CD14-positive monocyte (primary cell): ENCODE measurements at regions of chr3 and their contacts with region 1.

Region 1: DNA sequence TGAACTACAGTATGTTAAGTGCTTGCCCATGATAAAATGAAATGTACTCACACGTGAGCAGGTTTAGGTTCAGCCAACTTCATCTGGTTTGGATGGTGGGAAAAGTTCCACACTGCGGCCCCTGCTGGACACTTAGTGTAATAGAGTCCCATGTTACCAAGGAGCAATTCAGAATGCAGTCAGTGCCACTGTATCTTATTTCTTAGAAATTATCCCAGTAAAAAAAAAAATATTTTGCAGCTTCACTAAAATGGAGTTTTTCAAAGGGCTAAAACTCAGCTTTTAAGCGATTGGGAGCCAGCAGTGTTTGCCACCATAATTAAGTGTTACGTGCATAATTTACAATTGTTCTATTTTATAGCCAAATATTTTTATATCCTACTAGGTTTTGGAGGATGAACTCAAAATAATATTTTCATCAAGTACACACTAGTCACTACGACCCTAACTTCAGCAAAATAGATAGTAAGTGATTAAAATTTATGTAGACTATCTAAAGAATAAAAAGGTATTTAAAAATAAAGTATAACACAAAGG is 371.7 kb upstream of the GBE1 start:
- DNase-seq: peak; percentile 45 to 68 (median 62)
- H3K4me3 ChIP-seq: no peak overlapping the region
- H3K4me3 Mint-ChIP-seq: no peak overlapping the region
- H3K27ac ChIP-seq: no peak overlapping the region
- H3K27ac Mint-ChIP-seq: peak overlapping the region in 1 of 7 donors; percentile 58
- H3K4me1 ChIP-seq: peaks cover 14 to 21% of the 10 kb centered on the region in 2 donors
- H3K4me1 Mint-ChIP-seq: peaks cover 23% of the 10 kb centered on the region
- H3K27me3 ChIP-seq: no peaks in the 10 kb centered on the region
- H3K27me3 Mint-ChIP-seq: peaks cover 0 to 4% (median 0%) of the 10 kb centered on the region in 3 donors
- CTCF ChIP-seq: peak; percentile 90

Region 2: DNA sequence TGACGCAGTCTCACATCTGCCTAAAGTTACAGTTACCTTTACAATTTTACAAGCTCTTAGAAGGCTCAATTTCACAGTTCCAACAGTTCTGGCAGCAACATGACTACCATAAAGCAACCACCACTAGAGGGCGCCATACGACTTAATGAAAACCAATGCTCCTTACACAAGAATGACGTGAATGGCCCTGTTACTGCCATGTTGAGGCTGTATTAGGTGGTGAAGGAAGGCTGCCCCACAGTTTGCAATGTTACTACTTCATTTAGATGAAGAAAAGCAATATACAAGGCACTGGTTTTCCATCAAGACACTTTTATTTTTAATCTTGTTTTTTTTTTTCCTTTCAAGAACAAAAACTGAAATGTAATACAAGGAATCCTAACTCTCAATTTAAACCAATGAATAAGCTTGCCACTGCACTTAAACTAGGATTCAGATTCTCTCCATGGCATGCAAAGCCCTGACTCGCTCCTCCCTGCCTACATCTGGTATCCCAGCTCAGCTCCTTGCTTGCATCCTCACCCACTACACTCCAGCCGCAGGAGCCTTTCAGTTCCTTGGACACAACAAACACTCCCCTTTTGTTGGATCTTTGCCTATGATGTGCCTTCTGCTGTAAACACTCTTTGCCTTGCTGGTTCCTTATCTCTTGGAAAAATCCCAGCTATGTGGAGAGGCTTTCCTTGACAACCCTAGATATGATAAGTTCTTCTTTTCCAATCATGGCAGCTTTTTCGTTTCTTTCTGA is 642.4 kb before region 1 on chr3:
- intact Hi-C with region 1: loop called in 1 of 2 experiments (anchors 10 kb)
- DNase-seq: peak; percentile 73 to 86 (median 85)
- H3K4me3 ChIP-seq: no peak overlapping the region
- H3K4me3 Mint-ChIP-seq: no peak overlapping the region
- H3K27ac ChIP-seq: no peak overlapping the region
- H3K27ac Mint-ChIP-seq: peak overlapping the region; percentile 9 to 90 (median 52)
- H3K4me1 ChIP-seq: peaks cover 16 to 20% of the 10 kb centered on the region in 2 donors
- H3K4me1 Mint-ChIP-seq: peaks cover 24% of the 10 kb centered on the region
- H3K27me3 ChIP-seq: no peaks in the 10 kb centered on the region
- H3K27me3 Mint-ChIP-seq: peaks cover 0 to 2% (median 0%) of the 10 kb centered on the region in 3 donors
- CTCF ChIP-seq: peak; percentile 85

Region 3: DNA sequence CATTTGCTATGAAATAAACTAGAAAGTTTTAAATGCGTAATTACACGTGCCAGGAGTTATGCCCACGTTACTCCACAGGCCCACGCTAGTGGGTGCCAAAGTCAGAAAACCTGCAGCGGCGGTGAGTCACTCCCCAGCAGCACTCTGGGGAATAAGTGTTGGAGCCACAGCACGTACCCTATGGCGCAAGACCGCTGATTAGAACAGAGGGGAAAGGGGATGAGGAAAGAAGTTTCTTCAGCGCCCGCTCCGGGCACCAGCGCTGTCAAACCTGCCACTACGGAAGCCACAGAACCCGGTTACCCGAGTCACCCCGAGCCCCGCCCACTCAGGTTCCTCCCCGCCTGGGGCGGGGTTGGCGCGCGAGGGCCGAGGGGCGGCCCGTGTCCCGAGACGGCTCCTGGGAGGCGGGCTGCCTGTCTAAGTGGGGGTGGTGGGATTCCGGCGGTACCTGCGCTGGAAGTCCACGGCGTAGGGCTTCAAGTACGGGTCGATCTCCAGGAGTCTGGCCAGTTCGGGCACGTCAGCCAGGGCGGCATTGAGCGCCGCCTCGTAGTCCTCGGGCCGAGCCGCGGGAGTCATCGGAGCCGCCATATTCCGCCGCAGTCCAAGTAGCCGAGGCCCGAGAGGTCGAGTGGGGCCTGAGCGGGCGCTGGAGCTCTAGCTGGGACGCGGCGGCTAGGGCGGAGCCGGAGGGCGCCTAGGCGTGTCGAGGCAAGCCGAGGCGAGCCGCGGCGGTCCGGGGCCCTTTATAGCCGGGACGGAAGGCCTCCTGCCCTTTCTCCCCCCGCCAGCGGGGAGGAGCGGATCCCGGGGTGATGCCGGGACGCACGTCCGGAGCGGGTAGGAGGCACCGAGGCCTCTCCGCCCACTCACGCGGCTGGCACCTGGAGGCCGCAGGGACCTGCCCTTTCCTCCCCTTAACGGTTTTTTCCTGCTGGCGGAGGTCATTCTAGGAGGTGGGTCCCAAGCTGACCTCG is 371.9 kb before region 1 on chr3 and contains the start of gene GBE1:
- intact Hi-C with region 1: loop called in 1 of 2 experiments (anchors 5 kb)
- DNase-seq: peak; percentile 99
- H3K4me3 ChIP-seq: peak within 1 kb of the TSS; percentile 55 to 75 (median 72)
- H3K4me3 Mint-ChIP-seq: peak within 1 kb of the TSS; percentile 81 to 93
- H3K27ac ChIP-seq: peak within 1 kb of the TSS; percentile 96 to 99
- H3K27ac Mint-ChIP-seq: peak within 1 kb of the TSS; percentile 98 to 100 (median 100)
- H3K4me1 ChIP-seq: peaks cover 12 to 22% of the 10 kb centered on the region in 2 donors
- H3K4me1 Mint-ChIP-seq: peaks cover 29% of the 10 kb centered on the region
- H3K27me3 ChIP-seq: no peaks in the 10 kb centered on the region
- H3K27me3 Mint-ChIP-seq: peaks cover 0 to 2% (median 2%) of the 10 kb centered on the region in 3 donors
- CTCF ChIP-seq: peak; percentile 74
- polyA plus RNA-seq, gene GBE1: 7.7 to 21.7 (median 19.1) TPM

Region 4: DNA sequence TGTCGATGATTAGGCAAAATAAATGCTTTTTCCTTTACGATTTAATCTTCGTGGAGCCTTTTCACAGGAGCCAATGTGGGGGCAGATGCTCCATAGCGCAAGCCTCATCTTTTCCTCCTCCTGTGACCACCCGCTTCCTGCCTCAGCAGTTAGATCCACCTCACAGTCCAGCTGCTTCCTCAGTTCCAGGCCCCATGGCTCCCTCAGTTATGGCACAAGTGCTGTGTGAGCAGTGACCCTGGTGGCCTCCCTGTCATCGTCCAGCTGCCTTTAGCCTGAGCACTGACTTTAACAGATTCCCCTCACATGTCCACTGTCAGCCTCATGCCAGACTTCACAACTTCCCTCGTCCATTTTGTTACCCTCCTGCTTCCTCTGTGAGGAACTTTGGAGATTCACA is 52.9 kb after region 1 on chr3:
- intact Hi-C with region 1: no loop called
- DNase-seq: no peak
- H3K4me3 ChIP-seq: no peak overlapping the region
- H3K4me3 Mint-ChIP-seq: no peak overlapping the region
- H3K27ac ChIP-seq: no peak overlapping the region
- H3K27ac Mint-ChIP-seq: peak overlapping the region in 1 of 7 donors; percentile 66
- H3K4me1 ChIP-seq: no peaks in the 10 kb centered on the region
- H3K4me1 Mint-ChIP-seq: no peaks in the 10 kb centered on the region
- H3K27me3 ChIP-seq: no peaks in the 10 kb centered on the region
- H3K27me3 Mint-ChIP-seq: no peaks in the 10 kb centered on the region
- CTCF ChIP-seq: no peak

Region 5: GRCh38 chr3:82274897-82275296 is 141.8 kb after region 1 on chr3:
- intact Hi-C with region 1: no loop called
- DNase-seq: no peak
- H3K4me3 ChIP-seq: no peak overlapping the region
- H3K4me3 Mint-ChIP-seq: no peak overlapping the region
- H3K27ac ChIP-seq: no peak overlapping the region
- H3K27ac Mint-ChIP-seq: no peak overlapping the region
- H3K4me1 ChIP-seq: no peaks in the 10 kb centered on the region
- H3K4me1 Mint-ChIP-seq: no peaks in the 10 kb centered on the region
- H3K27me3 ChIP-seq: no peaks in the 10 kb centered on the region
- H3K27me3 Mint-ChIP-seq: no peaks in the 10 kb centered on the region
- CTCF ChIP-seq: no peak